GM10248 (cell line): ENCODE measurements at regions of chr1 and their contacts with region 1.

Region 1: GRCh38 chr1:209248649-209249279 is 334.8 kb upstream of the CAMK1G start:
- DNase-seq: peak; percentile 62
- CTCF ChIP-seq: peak; percentile 87

Region 2: GRCh38 chr1:209207701-209208286 is 41.0 kb before region 1 on chr1:
- CTCF ChIA-PET with region 1: interaction called, 23 read pairs
- POLR2A ChIA-PET with region 1: no interaction called
- DNase-seq: peak; percentile 68
- CTCF ChIP-seq: peak; percentile 80

Region 3: DNA sequence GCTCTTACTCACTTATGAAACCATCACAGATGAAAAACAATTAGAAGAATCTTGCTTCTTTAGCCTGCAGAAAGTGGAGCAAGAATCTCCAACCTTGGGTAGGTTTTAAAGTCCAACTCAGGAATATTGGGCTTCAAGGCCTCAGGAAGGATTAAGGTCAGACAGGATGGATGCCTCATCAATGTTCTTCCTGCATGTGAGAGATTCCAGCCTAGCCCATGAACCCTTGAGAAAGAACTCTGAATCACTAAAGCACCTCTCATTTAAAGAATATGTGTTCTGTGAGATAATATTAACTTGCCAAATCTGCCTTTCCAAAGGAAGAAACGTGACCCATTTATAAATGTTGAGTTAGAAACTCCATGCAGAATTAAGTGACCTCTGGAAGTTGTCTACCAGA is 10.4 kb before region 1 on chr1:
- CTCF ChIA-PET with region 1: interaction called, 43 read pairs
- POLR2A ChIA-PET with region 1: no interaction called
- DNase-seq: no peak
- CTCF ChIP-seq: no peak

Region 4: DNA sequence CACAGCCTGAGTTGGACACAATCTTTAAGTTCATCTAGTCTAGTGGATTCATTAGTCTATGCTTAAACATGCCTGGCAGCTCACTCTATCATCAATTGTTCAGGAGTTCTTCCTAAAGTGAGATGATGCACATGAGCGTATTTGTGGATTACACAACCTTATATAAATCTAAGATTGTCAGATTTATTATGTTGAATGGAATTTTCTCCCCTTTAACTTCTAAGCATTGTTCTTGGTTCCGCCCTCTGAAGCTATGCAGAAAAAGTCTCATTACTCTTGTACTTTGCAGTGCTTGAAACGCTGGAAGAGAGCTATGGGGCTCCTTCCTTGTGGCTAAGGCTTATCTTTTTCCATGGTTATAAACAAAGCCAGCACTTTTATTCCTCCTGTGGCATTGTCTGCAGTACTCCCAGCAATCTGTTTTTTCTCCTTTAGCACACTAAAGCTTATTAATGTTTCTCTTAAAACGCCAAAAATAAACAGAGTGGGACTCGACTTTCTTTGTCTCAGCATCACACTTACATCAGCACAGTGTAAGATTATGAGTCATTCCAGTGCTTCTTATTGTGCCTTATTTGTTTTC is 17.9 kb after region 1 on chr1:
- CTCF ChIA-PET with region 1: interaction called, 10 read pairs
- POLR2A ChIA-PET with region 1: no interaction called
- DNase-seq: no peak
- CTCF ChIP-seq: no peak